Right ventricle myocardium inferior (tissue), 1 donor: ENCODE measurements at regions of chr7 and their contacts with region 1.

Region 1: GRCh38 chr7:28020302-28020940 is 160.2 kb downstream of the JAZF1 start:
- DNase-seq: no peak
- ATAC-seq: peak; percentile 79

Region 2: GRCh38 chr7:27196287-27196767 is 824.1 kb before region 1 on chr7:
- intact Hi-C with region 1: loop called (anchors 2 kb)
- DNase-seq: peak; percentile 88
- ATAC-seq: peak; percentile 50

Region 3: DNA sequence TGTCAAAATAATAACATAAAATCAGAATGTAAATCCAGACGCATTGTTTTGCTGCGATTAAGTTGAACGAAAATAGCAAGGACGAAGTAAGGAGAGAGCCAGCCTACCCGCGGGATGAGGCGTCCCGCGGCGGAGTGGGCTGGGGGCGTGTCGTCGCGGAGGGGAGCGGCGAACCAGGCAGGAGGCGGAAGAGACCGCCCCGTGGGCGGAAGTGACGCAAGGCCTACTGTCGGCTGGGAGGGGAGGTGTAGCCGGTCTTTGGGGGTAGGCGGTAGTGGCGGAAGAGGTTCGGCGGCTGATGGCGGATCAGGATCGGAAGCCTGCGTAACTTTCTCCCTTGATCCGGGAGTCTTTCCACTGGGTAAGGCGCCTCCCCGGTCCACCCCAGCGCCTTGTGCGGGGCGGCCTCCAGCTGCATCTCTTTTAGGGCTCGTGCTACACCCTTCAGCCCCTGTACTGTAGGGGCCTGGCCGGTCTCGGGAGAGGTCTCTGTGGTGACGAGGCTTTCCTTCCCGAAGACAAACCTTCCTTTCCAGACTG is 280.4 kb before region 1 on chr7 and contains the start of gene TAX1BP1:
- intact Hi-C with region 1: loop called (anchors 2 kb)
- DNase-seq: peak; percentile 98
- ATAC-seq: peak; percentile 99
- total RNA-seq, gene TAX1BP1: 169 TPM

Region 4: DNA sequence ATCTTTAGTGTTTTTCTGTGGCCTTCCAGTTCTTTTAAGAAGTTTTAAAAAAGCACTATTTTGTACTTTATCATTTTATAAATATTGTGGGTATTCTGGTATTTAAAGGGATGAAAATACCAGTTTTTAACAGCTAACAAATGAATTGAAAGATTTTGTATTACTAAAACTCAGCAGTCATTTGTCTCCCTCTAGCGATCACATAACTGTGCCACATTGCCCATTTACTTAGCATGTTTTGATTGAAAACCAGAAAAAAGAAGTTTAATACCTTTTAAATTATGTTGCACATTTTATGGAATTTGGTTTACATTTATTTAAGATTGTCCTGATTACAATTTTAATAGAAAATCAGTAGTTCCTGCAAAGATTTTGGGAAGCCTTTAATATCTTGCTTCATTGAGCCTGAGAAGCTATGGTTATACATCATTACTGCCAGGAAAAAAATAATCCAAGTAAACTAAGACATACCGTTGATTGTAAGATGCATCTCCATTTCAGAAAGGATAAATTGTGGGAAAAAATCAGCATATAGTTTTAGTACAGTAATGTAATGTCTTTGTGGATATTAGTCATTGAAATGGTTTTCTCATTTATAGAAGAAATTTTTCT is 245.6 kb before region 1 on chr7:
- intact Hi-C with region 1: loop called (anchors 10 kb)
- DNase-seq: no peak
- ATAC-seq: no peak

Region 5: GRCh38 chr7:27834179-27834921 is 186.1 kb before region 1 on chr7:
- intact Hi-C with region 1: loop called (anchors 10 kb)
- DNase-seq: no peak
- ATAC-seq: peak; percentile 91

Region 6: GRCh38 chr7:27933671-27934565 is 86.5 kb before region 1 on chr7:
- intact Hi-C with region 1: no loop called
- DNase-seq: no peak
- ATAC-seq: no peak